Caco-2 (cell line): ENCODE measurements at regions of chr2 and their contacts with region 1.

Region 1: GRCh38 chr2:20744366-20745335 is 77.7 kb downstream of the GDF7 start:
- DNase-seq: no peak
- H3K4me3 ChIP-seq: no peak overlapping the region
- H3K4me3 Mint-ChIP-seq: no peak overlapping the region
- H3K27ac Mint-ChIP-seq: no peak overlapping the region
- H3K4me1 ChIP-seq: peaks cover 34% of the 10 kb centered on the region
- H3K4me1 Mint-ChIP-seq: peaks cover 37% of the 10 kb centered on the region
- H3K27me3 ChIP-seq: no peaks in the 10 kb centered on the region
- H3K27me3 Mint-ChIP-seq: no peaks in the 10 kb centered on the region
- CTCF ChIP-seq: no peak

Region 2: GRCh38 chr2:20282916-20283592 is 461.6 kb before region 1 on chr2:
- CTCF ChIA-PET with region 1: no interaction called
- POLR2A ChIA-PET with region 1: no interaction called
- intact Hi-C with region 1: no loop called
- DNase-seq: no peak
- H3K4me3 ChIP-seq: no peak overlapping the region
- H3K4me3 Mint-ChIP-seq: no peak overlapping the region
- H3K27ac Mint-ChIP-seq: no peak overlapping the region
- H3K4me1 ChIP-seq: no peaks in the 10 kb centered on the region
- H3K4me1 Mint-ChIP-seq: no peaks in the 10 kb centered on the region
- H3K27me3 ChIP-seq: no peaks in the 10 kb centered on the region
- H3K27me3 Mint-ChIP-seq: no peaks in the 10 kb centered on the region
- CTCF ChIP-seq: no peak

Region 3: DNA sequence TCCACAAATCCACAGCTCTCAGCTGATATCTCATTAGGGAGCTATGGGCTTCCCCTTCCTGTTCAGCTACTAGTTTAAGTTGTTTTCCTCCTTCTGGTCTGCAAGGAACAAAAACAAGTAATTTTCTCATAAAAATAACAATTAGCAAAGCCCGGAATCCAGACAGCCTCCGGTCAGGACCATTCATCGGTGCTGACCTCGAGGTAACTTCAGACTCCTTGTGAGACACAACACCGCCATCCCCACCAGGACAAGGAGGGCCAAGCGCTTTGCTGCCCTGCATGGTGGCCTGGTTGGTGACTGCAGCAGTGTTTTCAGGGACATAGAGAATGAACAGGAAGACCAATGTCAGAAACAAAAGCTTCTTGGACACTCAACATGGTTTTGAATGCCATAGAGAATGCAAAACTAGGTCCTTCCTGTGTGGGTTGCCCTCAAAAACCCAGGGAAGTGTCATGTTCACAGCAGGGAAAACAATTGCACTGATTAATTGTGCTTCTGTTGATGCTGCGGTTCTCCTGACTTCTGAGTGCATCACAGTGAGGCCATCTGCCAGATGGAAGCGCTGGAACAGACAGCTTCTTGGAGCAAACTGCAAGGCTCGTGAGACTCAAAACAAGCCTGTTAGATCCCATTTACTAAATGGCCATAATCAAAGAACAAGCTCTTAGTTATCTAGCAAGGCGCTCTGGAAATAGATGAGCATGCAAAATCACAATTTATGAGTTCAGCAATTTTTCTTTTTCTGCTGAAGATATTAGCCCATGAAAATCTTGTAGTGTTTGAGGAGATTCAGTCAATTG is 170.8 kb before region 1 on chr2:
- CTCF ChIA-PET with region 1: no interaction called
- POLR2A ChIA-PET with region 1: no interaction called
- intact Hi-C with region 1: no loop called
- DNase-seq: no peak
- H3K4me3 ChIP-seq: no peak overlapping the region
- H3K4me3 Mint-ChIP-seq: no peak overlapping the region
- H3K27ac Mint-ChIP-seq: no peak overlapping the region
- H3K4me1 ChIP-seq: peaks cover 8% of the 10 kb centered on the region
- H3K4me1 Mint-ChIP-seq: peaks cover 24% of the 10 kb centered on the region
- H3K27me3 ChIP-seq: no peaks in the 10 kb centered on the region
- H3K27me3 Mint-ChIP-seq: no peaks in the 10 kb centered on the region
- CTCF ChIP-seq: no peak

Region 4: GRCh38 chr2:20771299-20771698 is 26.6 kb after region 1 on chr2:
- CTCF ChIA-PET with region 1: no interaction called
- POLR2A ChIA-PET with region 1: no interaction called
- intact Hi-C with region 1: loop called (anchors 2 kb)
- DNase-seq: no peak
- H3K4me3 ChIP-seq: no peak overlapping the region
- H3K4me3 Mint-ChIP-seq: no peak overlapping the region
- H3K27ac Mint-ChIP-seq: no peak overlapping the region
- H3K4me1 ChIP-seq: peaks cover 23% of the 10 kb centered on the region
- H3K4me1 Mint-ChIP-seq: peaks cover 29% of the 10 kb centered on the region
- H3K27me3 ChIP-seq: no peaks in the 10 kb centered on the region
- H3K27me3 Mint-ChIP-seq: no peaks in the 10 kb centered on the region
- CTCF ChIP-seq: no peak

Region 5: DNA sequence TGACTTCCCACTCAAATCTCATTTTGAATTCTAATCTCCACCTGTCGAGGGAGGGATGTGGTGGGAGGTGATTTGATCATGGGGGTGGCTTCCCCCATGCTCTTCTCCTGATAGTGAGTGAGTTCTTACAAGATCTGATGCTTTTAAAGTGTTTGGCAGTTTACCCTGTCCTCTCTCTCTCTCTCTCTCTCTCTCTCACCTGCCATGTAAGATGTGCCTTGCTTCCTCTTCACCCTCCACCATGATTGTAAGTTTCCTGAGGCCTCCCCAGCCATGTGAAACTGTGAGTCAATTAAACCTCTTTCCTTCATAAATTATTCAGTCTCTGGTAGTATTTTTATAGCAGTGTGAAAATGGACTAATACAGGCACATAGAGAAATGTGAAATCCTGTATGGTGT is 85.2 kb after region 1 on chr2:
- CTCF ChIA-PET with region 1: no interaction called
- POLR2A ChIA-PET with region 1: no interaction called
- intact Hi-C with region 1: no loop called
- DNase-seq: no peak
- H3K4me3 ChIP-seq: no peak overlapping the region
- H3K4me3 Mint-ChIP-seq: no peak overlapping the region
- H3K27ac Mint-ChIP-seq: no peak overlapping the region
- H3K4me1 ChIP-seq: no peaks in the 10 kb centered on the region
- H3K4me1 Mint-ChIP-seq: no peaks in the 10 kb centered on the region
- H3K27me3 ChIP-seq: no peaks in the 10 kb centered on the region
- H3K27me3 Mint-ChIP-seq: no peaks in the 10 kb centered on the region
- CTCF ChIP-seq: no peak

Region 6: GRCh38 chr2:21381421-21381820 is 636.8 kb after region 1 on chr2:
- CTCF ChIA-PET with region 1: interaction called, 11 read pairs
- POLR2A ChIA-PET with region 1: no interaction called
- intact Hi-C with region 1: no loop called
- DNase-seq: no peak
- H3K4me3 ChIP-seq: no peak overlapping the region
- H3K4me3 Mint-ChIP-seq: no peak overlapping the region
- H3K27ac Mint-ChIP-seq: no peak overlapping the region
- H3K4me1 ChIP-seq: no peaks in the 10 kb centered on the region
- H3K4me1 Mint-ChIP-seq: no peaks in the 10 kb centered on the region
- H3K27me3 ChIP-seq: no peaks in the 10 kb centered on the region
- H3K27me3 Mint-ChIP-seq: peaks cover 3% of the 10 kb centered on the region
- CTCF ChIP-seq: no peak